IMR-90 (cell line): ENCODE measurements at regions of chr6 and their contacts with region 1.

Region 1: GRCh38 chr6:108097882-108098281 is 23.3 kb upstream of the OSTM1 start:
- DNase-seq: no peak
- ATAC-seq: no peak
- H3K4me3 ChIP-seq: no peak overlapping the region
- H3K27ac ChIP-seq: no peak overlapping the region
- H3K4me1 ChIP-seq: no peaks in the 10 kb centered on the region
- H3K27me3 ChIP-seq: peaks cover 5% of the 10 kb centered on the region
- CTCF ChIP-seq: no peak
- POLR2A ChIP-seq: no peak
- RAD21 ChIP-seq: no peak

Region 2: DNA sequence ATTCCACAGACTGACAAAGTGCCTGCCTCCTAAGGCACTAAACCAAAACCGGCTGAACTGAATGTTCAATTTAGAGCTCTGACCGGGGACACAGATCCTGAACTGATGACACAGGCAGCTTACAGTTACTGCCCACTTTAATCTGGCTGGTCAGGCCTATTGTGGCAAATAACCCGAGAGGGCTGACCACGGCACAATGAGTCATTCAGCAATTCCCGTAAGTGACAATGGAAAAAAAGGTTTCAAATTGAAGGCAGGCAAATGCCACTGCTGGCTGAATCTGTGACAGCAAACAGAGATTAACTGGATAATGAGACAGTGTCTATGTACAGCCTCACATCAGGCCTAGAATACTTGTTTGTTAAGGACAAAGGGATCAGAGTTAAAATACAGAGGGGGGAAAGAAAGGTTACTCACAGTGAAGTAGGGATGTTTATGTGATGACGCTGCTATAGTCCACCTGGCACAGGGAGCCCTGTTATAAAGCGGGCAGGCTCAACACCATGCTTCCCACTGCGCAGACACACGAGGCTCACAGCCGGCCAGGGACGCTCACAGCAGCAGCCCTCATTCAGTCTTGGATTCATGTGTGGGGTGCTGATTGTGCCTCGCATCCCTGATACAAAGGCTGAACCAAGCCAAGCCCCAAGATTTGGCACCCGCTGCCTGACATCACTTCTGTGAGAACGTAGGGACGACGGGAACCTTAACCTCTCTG is 1523.0 kb before region 1 on chr6:
- CTCF ChIA-PET with region 1: interaction called, 12 read pairs
- POLR2A ChIA-PET with region 1: no interaction called
- dilution Hi-C with region 1: no loop called
- in situ Hi-C with region 1: no loop called
- intact Hi-C with region 1: no loop called
- DNase-seq: peak; percentile 70
- ATAC-seq: peak; percentile 82
- H3K4me3 ChIP-seq: no peak overlapping the region
- H3K27ac ChIP-seq: no peak overlapping the region
- H3K4me1 ChIP-seq: peaks cover 11% of the 10 kb centered on the region
- H3K27me3 ChIP-seq: no peaks in the 10 kb centered on the region
- CTCF ChIP-seq: no peak
- POLR2A ChIP-seq: no peak
- RAD21 ChIP-seq: no peak

Region 3: GRCh38 chr6:107822176-107823046 is 275.5 kb before region 1 on chr6:
- CTCF ChIA-PET with region 1: no interaction called
- POLR2A ChIA-PET with region 1: no interaction called
- dilution Hi-C with region 1: no loop called
- in situ Hi-C with region 1: no loop called
- intact Hi-C with region 1: no loop called
- DNase-seq: no peak
- ATAC-seq: no peak
- H3K4me3 ChIP-seq: no peak overlapping the region
- H3K27ac ChIP-seq: no peak overlapping the region
- H3K4me1 ChIP-seq: no peaks in the 10 kb centered on the region
- H3K27me3 ChIP-seq: peaks cover 30% of the 10 kb centered on the region
- CTCF ChIP-seq: no peak
- POLR2A ChIP-seq: no peak
- RAD21 ChIP-seq: no peak

Region 4: GRCh38 chr6:108157234-108157980 is 59.5 kb after region 1 on chr6:
- CTCF ChIA-PET with region 1: no interaction called
- POLR2A ChIA-PET with region 1: no interaction called
- dilution Hi-C with region 1: no loop called
- in situ Hi-C with region 1: no loop called
- intact Hi-C with region 1: no loop called
- DNase-seq: no peak
- ATAC-seq: no peak
- H3K4me3 ChIP-seq: no peak overlapping the region
- H3K27ac ChIP-seq: no peak overlapping the region
- H3K4me1 ChIP-seq: no peaks in the 10 kb centered on the region; the same call in 1 of the 2 replicates
- H3K27me3 ChIP-seq: peaks cover 76% of the 10 kb centered on the region
- CTCF ChIP-seq: no peak
- POLR2A ChIP-seq: no peak
- RAD21 ChIP-seq: no peak

Region 5: GRCh38 chr6:109174911-109175310 is 1077.0 kb after region 1 on chr6:
- CTCF ChIA-PET with region 1: no interaction called
- POLR2A ChIA-PET with region 1: no interaction called
- dilution Hi-C with region 1: no loop called
- in situ Hi-C with region 1: no loop called
- intact Hi-C with region 1: no loop called
- DNase-seq: no peak
- ATAC-seq: no peak
- H3K4me3 ChIP-seq: no peak overlapping the region
- H3K27ac ChIP-seq: no peak overlapping the region
- H3K4me1 ChIP-seq: 0 out of 2 replicates have a peak, but pooled peaks cover 2% of the 10 kb centered on the region
- H3K27me3 ChIP-seq: no peaks in the 10 kb centered on the region
- CTCF ChIP-seq: no peak
- POLR2A ChIP-seq: no peak
- RAD21 ChIP-seq: no peak